ENCODE measurements at regions of chr20 and their contacts with region 1.

Region 1: GRCh38 chr20:44909872-44910689 is at the start of gene PABPC1L:
- DNase-seq: peak; percentile 99
- H3K27ac ChIP-seq: peak within 1 kb of the TSS; percentile 64
- CTCF ChIP-seq: no peak

Region 2: DNA sequence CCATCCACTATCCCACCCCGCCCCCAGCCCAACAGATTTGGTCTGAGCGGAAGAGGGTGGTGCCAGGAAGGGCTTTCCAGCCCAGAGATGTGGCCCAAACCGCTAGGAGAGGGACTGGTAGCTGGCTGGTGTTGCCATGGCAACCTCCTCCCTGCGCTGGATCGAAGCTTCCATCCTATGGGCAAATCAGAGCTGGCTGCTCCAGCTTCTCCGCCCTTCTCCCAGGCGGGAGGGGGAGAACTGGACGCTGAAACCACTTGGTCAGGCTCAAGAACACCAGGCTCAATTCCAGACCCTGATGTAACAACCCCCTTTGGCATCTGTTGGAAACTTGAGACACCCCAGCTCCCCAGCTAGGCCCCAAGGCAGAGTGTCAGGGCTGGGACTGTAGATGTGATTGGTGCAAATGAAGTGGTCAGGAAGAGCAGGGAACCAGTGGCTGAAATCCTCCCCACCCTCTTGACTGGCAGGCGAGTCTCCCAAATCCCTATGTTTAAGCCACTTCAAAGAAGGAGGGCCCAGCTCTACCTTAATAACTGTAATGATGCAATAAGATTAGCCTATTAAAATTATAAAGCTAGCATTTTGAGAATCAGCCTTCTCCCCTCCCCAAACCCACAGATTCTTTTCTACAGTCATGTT is 104.0 kb before region 1 on chr20:
- CTCF ChIA-PET with region 1: no interaction called
- POLR2A ChIA-PET with region 1: no interaction called
- DNase-seq: peak; percentile 26
- H3K27ac ChIP-seq: no peak overlapping the region
- CTCF ChIP-seq: no peak

Region 3: DNA sequence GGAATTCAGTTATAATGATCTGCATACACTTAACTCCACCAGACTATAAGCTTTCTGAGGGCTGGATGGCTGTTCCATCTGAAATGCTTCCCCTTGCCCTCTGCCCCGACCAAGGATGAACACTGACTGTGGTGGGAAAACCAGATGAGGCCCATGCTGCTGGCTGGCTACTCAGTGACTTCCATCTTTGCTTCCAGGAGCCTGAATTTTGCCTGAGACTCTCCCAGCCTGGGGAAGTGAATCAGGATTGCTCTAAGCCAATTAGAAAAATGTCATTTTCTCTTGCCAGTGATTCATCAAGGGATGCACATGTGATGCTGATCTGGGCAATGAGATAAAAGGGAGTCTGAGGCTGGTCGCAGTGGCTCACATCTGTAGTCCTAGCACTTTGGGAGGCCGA is 51.8 kb after region 1 on chr20:
- CTCF ChIA-PET with region 1: interaction called, 3 read pairs
- POLR2A ChIA-PET with region 1: interaction called, 10 read pairs
- DNase-seq: peak; percentile 54
- H3K27ac ChIP-seq: no peak overlapping the region
- CTCF ChIP-seq: no peak

Measured in RWPE1 (cell line).